Head of caudate nucleus (tissue), 42 donors: ENCODE measurements at regions of chr4 and their contacts with region 1.

Region 1: GRCh38 chr4:170040031-170040680 is 14.0 kb upstream of the MFAP3L start:
- DNase-seq: no peak

Region 2: GRCh38 chr4:169807934-169808509 is 232.1 kb before region 1 on chr4:
- intact Hi-C with region 1: loop called (anchors 5 kb)
- DNase-seq: no peak